Caco-2 (cell line): ENCODE measurements at regions of chr4 and their contacts with region 1.

Region 1: GRCh38 chr4:174156239-174156826 is 127.1 kb downstream of the FBXO8 start:
- DNase-seq: peak in 1 of 2 experiments; percentile 42
- H3K4me3 ChIP-seq: no peak overlapping the region
- H3K4me3 Mint-ChIP-seq: no peak overlapping the region
- H3K27ac Mint-ChIP-seq: no peak overlapping the region
- H3K4me1 ChIP-seq: no peaks in the 10 kb centered on the region
- H3K4me1 Mint-ChIP-seq: no peaks in the 10 kb centered on the region
- H3K27me3 ChIP-seq: peaks cover 1% of the 10 kb centered on the region; the same call in 1 of the 2 replicates
- H3K27me3 Mint-ChIP-seq: no peaks in the 10 kb centered on the region
- CTCF ChIP-seq: peak; percentile 53 to 58

Region 2: GRCh38 chr4:173505924-173506518 is 650.3 kb before region 1 on chr4:
- CTCF ChIA-PET with region 1: no interaction called
- POLR2A ChIA-PET with region 1: no interaction called
- intact Hi-C with region 1: loop called (anchors 1 kb)
- DNase-seq: peak in 1 of 2 experiments; percentile 65
- H3K4me3 ChIP-seq: no peak overlapping the region
- H3K4me3 Mint-ChIP-seq: no peak overlapping the region
- H3K27ac Mint-ChIP-seq: no peak overlapping the region
- H3K4me1 ChIP-seq: 0 out of 2 replicates have a peak, but pooled peaks cover 3% of the 10 kb centered on the region
- H3K4me1 Mint-ChIP-seq: no peaks in the 10 kb centered on the region
- H3K27me3 ChIP-seq: no peaks in the 10 kb centered on the region
- H3K27me3 Mint-ChIP-seq: no peaks in the 10 kb centered on the region
- CTCF ChIP-seq: peak; percentile 53 to 69

Region 3: GRCh38 chr4:173859091-173859713 is 297.1 kb before region 1 on chr4:
- CTCF ChIA-PET with region 1: no interaction called
- POLR2A ChIA-PET with region 1: no interaction called
- intact Hi-C with region 1: loop called (anchors 10 kb)
- DNase-seq: no peak
- H3K4me3 ChIP-seq: no peak overlapping the region
- H3K4me3 Mint-ChIP-seq: no peak overlapping the region
- H3K27ac Mint-ChIP-seq: no peak overlapping the region
- H3K4me1 ChIP-seq: no peaks in the 10 kb centered on the region
- H3K4me1 Mint-ChIP-seq: no peaks in the 10 kb centered on the region
- H3K27me3 ChIP-seq: no peaks in the 10 kb centered on the region
- H3K27me3 Mint-ChIP-seq: peaks cover 10% of the 10 kb centered on the region
- CTCF ChIP-seq: no peak

Region 4: GRCh38 chr4:174005422-174005821 is 150.9 kb before region 1 on chr4:
- CTCF ChIA-PET with region 1: no interaction called
- POLR2A ChIA-PET with region 1: no interaction called
- intact Hi-C with region 1: loop called (anchors 10 kb)
- DNase-seq: peak; percentile 44 to 56
- H3K4me3 ChIP-seq: no peak overlapping the region
- H3K4me3 Mint-ChIP-seq: peak overlapping the region; percentile 43
- H3K27ac Mint-ChIP-seq: peak overlapping the region; percentile 71
- H3K4me1 ChIP-seq: peaks cover 14% of the 10 kb centered on the region
- H3K4me1 Mint-ChIP-seq: peaks cover 20% of the 10 kb centered on the region
- H3K27me3 ChIP-seq: no peaks in the 10 kb centered on the region
- H3K27me3 Mint-ChIP-seq: no peaks in the 10 kb centered on the region
- CTCF ChIP-seq: no peak

Region 5: DNA sequence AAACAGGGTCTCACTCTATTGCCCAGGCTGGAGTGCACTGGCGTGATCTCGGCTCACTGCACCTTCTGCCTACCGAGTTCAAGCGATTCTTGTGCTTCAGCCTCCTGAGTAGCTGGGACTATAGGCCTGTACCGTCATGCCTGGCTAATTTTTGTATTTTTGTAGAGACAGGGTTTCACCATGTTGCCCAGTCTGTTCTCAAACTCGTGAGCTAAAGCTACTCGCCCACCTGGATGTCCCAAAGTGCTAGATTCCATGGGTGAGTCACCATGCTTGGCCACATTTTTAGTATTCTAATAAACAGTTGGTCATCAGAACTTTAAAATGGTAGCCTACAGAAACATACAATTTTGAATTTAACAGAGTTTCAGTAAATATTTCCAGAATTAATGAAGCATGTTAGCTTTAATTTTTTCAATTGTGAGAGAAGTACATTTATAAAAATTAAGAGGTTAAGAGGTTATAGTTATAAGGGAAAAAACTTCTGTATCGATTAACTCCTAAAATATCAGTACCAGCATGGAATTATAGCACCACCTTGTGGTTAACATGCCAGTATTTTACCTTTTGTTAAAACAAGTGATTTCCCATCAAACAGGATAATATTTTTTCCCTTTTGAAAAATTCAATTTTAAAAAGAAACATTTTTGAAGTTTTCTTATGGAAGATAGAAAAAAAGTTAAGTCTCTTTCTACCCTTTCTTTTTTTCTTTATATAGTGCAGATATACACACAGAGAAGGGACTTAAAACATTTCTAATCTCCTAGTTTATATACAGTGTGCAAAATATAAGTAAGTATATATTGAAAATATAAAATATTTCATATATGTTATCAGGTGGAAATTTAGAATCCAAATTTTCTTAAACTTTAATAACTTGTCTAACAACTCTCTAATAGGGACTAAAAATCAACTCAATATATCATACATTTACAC is 162.8 kb after region 1 on chr4:
- CTCF ChIA-PET with region 1: no interaction called
- POLR2A ChIA-PET with region 1: no interaction called
- intact Hi-C with region 1: loop called (anchors 2 kb)
- DNase-seq: peak in 1 of 2 experiments; percentile 18
- H3K4me3 ChIP-seq: no peak overlapping the region
- H3K4me3 Mint-ChIP-seq: no peak overlapping the region
- H3K27ac Mint-ChIP-seq: no peak overlapping the region
- H3K4me1 ChIP-seq: no peaks in the 10 kb centered on the region
- H3K4me1 Mint-ChIP-seq: no peaks in the 10 kb centered on the region
- H3K27me3 ChIP-seq: no peaks in the 10 kb centered on the region
- H3K27me3 Mint-ChIP-seq: no peaks in the 10 kb centered on the region
- CTCF ChIP-seq: peak; percentile 42 to 45